OCI-LY7 (cell line): ENCODE measurements at regions of chr9 and their contacts with region 1.

Region 1: GRCh38 chr9:97632985-97633858 is at the starts of genes NCBP1 and TSTD2:
- DNase-seq: peak; percentile 99
- H3K4me3 ChIP-seq: peak within 1 kb of the TSS; percentile 97
- H3K27ac ChIP-seq: peak within 1 kb of the TSS; percentile 89
- H3K4me1 ChIP-seq: peaks cover 41% of the 10 kb centered on the region
- CTCF ChIP-seq: no peak
- total RNA-seq, gene NCBP1: 35.8 and 37.8 TPM in 2 replicates
- total RNA-seq, gene TSTD2: 15.8 and 17.1 TPM in 2 replicates

Region 2: GRCh38 chr9:95875305-95876137 is 1757.7 kb before region 1 on chr9 and contains the start of gene ERCC6L2:
- CTCF ChIA-PET with region 1: no interaction called
- POLR2A ChIA-PET with region 1: no interaction called
- intact Hi-C with region 1: loop called (anchors 5 kb)
- DNase-seq: peak; percentile 97
- H3K4me3 ChIP-seq: no peak within 1 kb of the TSS
- H3K27ac ChIP-seq: no peak within 1 kb of the TSS
- H3K4me1 ChIP-seq: peaks cover 8% of the 10 kb centered on the region
- CTCF ChIP-seq: no peak
- total RNA-seq, gene ERCC6L2: 34.9 and 41.0 TPM in 2 replicates

Region 3: GRCh38 chr9:96418074-96418809 is 1215.0 kb before region 1 on chr9 and contains the start of gene ZNF367:
- CTCF ChIA-PET with region 1: no interaction called
- POLR2A ChIA-PET with region 1: no interaction called
- intact Hi-C with region 1: loop called (anchors 10 kb)
- DNase-seq: peak; percentile 95
- H3K4me3 ChIP-seq: peak within 1 kb of the TSS; percentile 99
- H3K27ac ChIP-seq: peak within 1 kb of the TSS; percentile 99
- H3K4me1 ChIP-seq: peaks cover 48% of the 10 kb centered on the region
- CTCF ChIP-seq: no peak
- total RNA-seq, gene ZNF367: 33.3 and 35.1 TPM in 2 replicates

Region 4: GRCh38 chr9:96777426-96777864 is 855.8 kb before region 1 on chr9:
- CTCF ChIA-PET with region 1: no interaction called
- POLR2A ChIA-PET with region 1: no interaction called
- intact Hi-C with region 1: loop called (anchors 5 kb)
- DNase-seq: no peak
- H3K4me3 ChIP-seq: peak overlapping the region; percentile 74
- H3K27ac ChIP-seq: peak overlapping the region; percentile 27
- H3K4me1 ChIP-seq: peaks cover 16% of the 10 kb centered on the region
- CTCF ChIP-seq: no peak

Region 5: DNA sequence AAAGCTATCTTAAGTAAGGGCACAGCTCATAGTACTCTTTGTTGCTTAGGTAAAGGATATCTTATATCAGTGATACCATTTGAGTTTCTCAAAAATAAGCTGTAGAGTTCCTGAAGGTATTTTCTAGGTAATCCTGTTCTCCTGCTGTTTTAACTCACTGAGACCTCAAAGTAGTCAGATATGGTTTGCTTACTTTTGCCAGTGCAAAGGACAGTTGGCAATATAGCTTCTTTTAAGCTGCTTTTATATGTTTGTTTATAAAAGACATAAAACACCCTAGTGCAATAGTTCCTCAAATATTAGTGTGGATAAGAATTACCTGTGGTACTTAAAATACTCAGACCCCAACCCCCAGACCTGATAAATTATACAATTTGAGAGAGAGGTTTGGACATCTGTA is 12.5 kb after region 1 on chr9:
- CTCF ChIA-PET with region 1: interaction called, 3 read pairs
- POLR2A ChIA-PET with region 1: interaction called, 13 read pairs
- intact Hi-C with region 1: no loop called
- DNase-seq: no peak
- H3K4me3 ChIP-seq: no peak overlapping the region
- H3K27ac ChIP-seq: no peak overlapping the region
- H3K4me1 ChIP-seq: no peaks in the 10 kb centered on the region
- CTCF ChIP-seq: no peak

Region 6: GRCh38 chr9:97696803-97697601 is 63.8 kb after region 1 on chr9 and contains the start of gene XPA:
- CTCF ChIA-PET with region 1: interaction called, 4 read pairs
- POLR2A ChIA-PET with region 1: interaction called, 22 read pairs
- intact Hi-C with region 1: loop called (anchors 2 kb)
- DNase-seq: peak; percentile 96
- H3K4me3 ChIP-seq: peak within 1 kb of the TSS; percentile 85
- H3K27ac ChIP-seq: peak within 1 kb of the TSS; percentile 62
- H3K4me1 ChIP-seq: peaks cover 47% of the 10 kb centered on the region
- CTCF ChIP-seq: 0 out of 2 replicates have a peak, but pooled peaks have one; percentile 23
- total RNA-seq, gene XPA: 15.8 and 17.8 TPM in 2 replicates

Region 7: GRCh38 chr9:98255578-98256296 is 622.5 kb after region 1 on chr9 and contains the start of gene TBC1D2:
- CTCF ChIA-PET with region 1: no interaction called
- POLR2A ChIA-PET with region 1: no interaction called
- intact Hi-C with region 1: loop called (anchors 1 kb)
- DNase-seq: peak; percentile 95
- H3K4me3 ChIP-seq: peak within 1 kb of the TSS; percentile 75
- H3K27ac ChIP-seq: peak within 1 kb of the TSS; percentile 85
- H3K4me1 ChIP-seq: peaks cover 17% of the 10 kb centered on the region
- CTCF ChIP-seq: peak; percentile 51; the same call in 1 of the 2 replicates
- total RNA-seq, gene TBC1D2: 2.5 and 5.5 TPM in 2 replicates